Activated CD4-positive, alpha-beta T cell treated with anti-CD3 and anti-CD28 coated beads, Interleukin-2, amount 10 ng/mL, durations not matched to agents 7 days and 5 days (primary cell): ENCODE measurements at regions of chr1 and their contacts with region 1.

Region 1: DNA sequence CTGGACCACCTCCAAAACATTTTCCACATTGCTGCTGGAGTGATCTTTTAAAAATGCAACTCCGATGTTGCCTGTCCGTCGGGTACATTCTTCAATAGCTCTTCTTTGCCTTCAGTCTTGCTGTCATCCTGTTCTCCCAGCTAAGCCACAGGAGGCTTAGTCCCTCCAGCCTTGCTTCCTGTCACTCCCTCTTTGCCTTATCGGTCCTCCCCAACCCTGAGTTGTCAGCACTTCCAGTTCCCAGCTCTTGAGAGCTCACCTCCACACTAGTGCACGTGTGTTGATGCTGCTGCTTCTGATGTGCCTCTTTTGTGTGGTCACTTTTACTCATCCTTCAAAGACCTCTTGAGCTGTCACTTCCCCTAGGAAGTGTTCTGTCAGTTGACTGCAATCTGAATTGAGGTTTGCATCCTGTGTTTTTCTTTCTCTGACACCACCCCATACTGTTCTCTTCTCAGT is 15.3 kb downstream of the UCK2 start:
- DNase-seq: peak; percentile 39
- H3K4me3 Mint-ChIP-seq: no peak overlapping the region
- H3K27ac Mint-ChIP-seq: peak overlapping the region; percentile 9
- H3K4me1 Mint-ChIP-seq: peaks cover 50% of the 10 kb centered on the region
- H3K27me3 Mint-ChIP-seq: no peaks in the 10 kb centered on the region

Region 2: GRCh38 chr1:165828103-165828668 is 14.5 kb before region 1 on chr1:
- CTCF ChIA-PET with region 1: interaction called, 18 read pairs
- POLR2A ChIA-PET with region 1: interaction called, 7 read pairs
- DNase-seq: peak; percentile 36
- H3K4me3 Mint-ChIP-seq: peak overlapping the region; percentile 82
- H3K27ac Mint-ChIP-seq: peak overlapping the region; percentile 87
- H3K4me1 Mint-ChIP-seq: peaks cover 28% of the 10 kb centered on the region
- H3K27me3 Mint-ChIP-seq: peaks cover 6% of the 10 kb centered on the region

Region 3: DNA sequence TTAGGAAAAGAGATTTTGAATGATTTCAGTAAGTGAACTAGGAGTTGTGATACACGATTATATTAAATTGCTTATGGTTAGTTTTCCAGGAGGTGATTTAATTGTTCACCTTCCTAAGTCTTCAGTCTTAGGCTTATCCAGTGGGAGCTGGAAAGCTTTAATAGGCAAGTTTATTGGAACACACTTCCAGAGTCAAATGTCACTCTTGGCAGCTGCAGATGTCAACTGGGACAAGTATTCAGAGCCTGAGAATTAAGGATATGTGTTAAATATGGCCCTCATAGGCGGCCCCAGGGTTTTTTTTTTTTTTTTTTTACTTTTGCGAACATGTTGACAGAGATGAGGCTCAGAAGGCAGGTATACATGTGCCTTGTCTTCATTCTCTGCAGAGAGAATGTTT is 13.9 kb after region 1 on chr1:
- CTCF ChIA-PET with region 1: interaction called, 10 read pairs
- POLR2A ChIA-PET with region 1: no interaction called
- DNase-seq: no peak
- H3K4me3 Mint-ChIP-seq: no peak overlapping the region
- H3K27ac Mint-ChIP-seq: no peak overlapping the region
- H3K4me1 Mint-ChIP-seq: peaks cover 52% of the 10 kb centered on the region
- H3K27me3 Mint-ChIP-seq: no peaks in the 10 kb centered on the region